Vagina (tissue), 2 donors: ENCODE measurements at regions of chr4 and their contacts with region 1.

Region 1: DNA sequence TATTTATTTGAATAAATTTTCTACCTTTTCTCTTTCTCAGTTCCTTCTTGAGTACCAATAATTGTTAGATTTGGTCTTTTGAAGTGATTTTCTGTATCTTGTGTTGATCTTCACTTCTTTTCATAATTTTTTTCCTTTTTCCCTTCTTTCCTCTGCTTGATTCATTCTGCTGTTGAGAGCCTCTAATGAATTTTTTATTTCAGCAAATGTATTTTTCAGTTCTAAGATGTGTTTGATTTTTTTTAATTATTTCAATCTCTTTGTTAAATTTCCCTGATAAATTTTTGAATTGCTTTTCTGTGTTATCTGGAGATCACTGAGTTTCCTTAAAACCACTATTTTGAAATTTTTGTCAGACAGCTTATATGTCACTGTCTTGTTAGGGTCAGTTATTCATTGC is 155.4 kb upstream of the IL15 start:
- DNase-seq: no peak
- H3K4me3 ChIP-seq: no peak overlapping the region
- H3K27ac ChIP-seq: no peak overlapping the region
- H3K4me1 ChIP-seq: no peaks in the 10 kb centered on the region
- H3K27me3 ChIP-seq: no peaks in the 10 kb centered on the region
- CTCF ChIP-seq: no peak
- POLR2A ChIP-seq: no peak

Region 2: DNA sequence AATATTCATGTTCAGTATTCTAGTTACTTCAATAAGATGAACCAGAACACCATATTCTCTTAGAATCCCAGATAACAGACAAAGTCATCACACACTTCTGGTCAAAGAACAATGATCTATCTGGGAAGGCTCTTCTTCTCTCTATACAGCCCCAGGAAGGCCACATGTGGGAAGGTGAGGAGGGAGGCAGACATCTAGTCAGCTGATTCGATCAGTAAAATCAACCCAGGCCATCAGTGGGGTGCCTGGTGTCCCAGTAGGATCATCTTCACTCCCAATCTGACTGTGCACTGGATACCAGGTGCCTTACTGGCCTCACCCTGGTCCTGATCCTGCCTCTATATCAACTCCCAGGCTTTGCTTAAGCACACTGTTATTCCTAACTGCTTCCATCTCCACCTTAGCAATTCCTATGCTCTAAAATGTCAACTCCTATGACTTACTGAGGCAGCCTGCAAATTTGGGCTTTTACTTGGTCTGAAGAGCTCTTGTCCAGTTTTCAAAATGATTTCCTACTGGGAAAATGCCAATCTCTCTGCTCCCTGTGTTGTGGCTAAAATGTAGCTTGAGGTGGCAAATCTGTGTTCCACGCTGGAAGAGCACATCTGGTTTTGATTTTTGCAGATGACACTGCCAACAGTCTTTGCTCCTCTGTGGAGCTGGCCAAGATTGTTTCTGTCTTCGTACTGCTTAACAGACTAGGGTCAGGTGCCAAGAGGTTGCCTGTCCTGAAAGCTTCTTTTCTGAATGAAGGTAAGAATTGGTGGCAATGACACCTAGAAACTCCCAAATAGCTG is 1686.6 kb before region 1 on chr4:
- intact Hi-C with region 1: loop called (anchors 5 kb)
- DNase-seq: no peak
- H3K4me3 ChIP-seq: no peak overlapping the region
- H3K27ac ChIP-seq: no peak overlapping the region
- H3K4me1 ChIP-seq: peaks cover 25% of the 10 kb centered on the region
- H3K27me3 ChIP-seq: no peaks in the 10 kb centered on the region
- CTCF ChIP-seq: no peak
- POLR2A ChIP-seq: no peak

Region 3: DNA sequence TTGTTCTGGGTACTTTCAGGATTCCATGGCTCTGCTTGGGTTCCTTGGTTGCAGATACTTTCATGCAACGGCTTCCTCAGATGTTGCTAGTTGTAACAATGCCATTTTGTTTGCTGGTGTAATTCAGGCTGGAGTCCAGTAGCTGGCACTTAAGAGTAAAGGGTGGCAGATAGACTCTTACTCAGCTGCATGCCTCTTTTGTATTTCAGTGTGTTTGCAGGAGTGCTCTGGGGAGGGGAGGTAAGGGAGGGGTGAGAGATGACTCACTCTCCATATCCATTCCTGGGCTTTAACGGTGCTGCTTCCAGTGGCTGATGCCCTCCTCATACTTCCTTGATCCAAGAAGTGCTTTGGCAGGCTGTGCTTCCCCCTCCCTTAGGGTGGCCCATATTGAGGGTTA is 105.1 kb before region 1 on chr4:
- intact Hi-C with region 1: no loop called
- DNase-seq: no peak
- H3K4me3 ChIP-seq: no peak overlapping the region
- H3K27ac ChIP-seq: no peak overlapping the region
- H3K4me1 ChIP-seq: no peaks in the 10 kb centered on the region
- H3K27me3 ChIP-seq: no peaks in the 10 kb centered on the region
- CTCF ChIP-seq: no peak
- POLR2A ChIP-seq: no peak